Endothelial cell of umbilical vein (primary cell): ENCODE measurements at regions of chr1 and their contacts with region 1.

Region 1: DNA sequence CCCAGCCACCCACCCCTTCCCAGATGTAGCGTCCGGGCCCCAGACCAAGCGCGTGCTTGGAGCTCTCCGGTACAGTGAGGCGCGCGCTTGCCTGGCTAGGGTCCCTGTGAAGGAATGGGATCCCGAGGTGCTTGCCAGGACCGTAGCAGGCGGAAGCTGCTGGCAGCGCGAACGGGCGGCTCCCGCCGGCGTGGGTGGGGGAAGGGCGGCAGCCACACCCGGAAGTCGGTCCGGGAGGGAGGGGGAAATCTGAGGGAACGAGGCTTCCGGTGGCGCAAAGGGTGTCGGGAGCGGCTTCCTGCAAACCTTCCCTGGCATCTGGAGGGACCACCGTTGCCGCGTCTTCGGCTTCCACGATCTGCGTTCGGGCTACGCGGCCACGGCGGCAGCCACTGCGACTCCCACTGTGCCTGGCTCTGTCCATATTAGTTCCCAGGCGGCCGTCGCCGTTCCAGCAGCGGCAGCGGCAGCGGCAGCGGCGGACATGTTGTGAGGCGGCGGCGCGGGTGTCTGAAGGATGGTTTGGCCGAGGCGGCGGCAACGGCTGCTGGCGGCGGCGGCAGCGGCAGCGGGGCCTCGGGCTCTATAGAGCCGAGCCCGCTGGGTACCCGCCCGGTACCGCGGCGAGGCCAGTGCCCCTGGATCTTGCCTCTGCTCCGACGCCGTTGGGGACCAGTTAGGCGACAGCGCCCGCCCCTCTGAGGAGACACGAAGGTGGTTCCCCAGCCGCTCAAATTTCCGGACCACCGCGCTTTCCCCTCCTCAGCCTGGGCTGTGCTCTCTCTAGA is at the start of gene DR1:
- DNase-seq: peak; percentile 94
- H3K4me3 ChIP-seq: peak within 1 kb of the TSS; percentile 89 to 99 (median 97)
- H3K27ac ChIP-seq: peak within 1 kb of the TSS; percentile 88
- H3K4me1 ChIP-seq: peaks cover 22% of the 10 kb centered on the region
- H3K27me3 ChIP-seq: no peaks in the 10 kb centered on the region
- CTCF ChIP-seq: no peak
- POLR2A ChIP-seq: peak; percentile 93
- total RNA-seq, gene DR1: 49.4 and 52.2 TPM in 2 replicates

Region 2: DNA sequence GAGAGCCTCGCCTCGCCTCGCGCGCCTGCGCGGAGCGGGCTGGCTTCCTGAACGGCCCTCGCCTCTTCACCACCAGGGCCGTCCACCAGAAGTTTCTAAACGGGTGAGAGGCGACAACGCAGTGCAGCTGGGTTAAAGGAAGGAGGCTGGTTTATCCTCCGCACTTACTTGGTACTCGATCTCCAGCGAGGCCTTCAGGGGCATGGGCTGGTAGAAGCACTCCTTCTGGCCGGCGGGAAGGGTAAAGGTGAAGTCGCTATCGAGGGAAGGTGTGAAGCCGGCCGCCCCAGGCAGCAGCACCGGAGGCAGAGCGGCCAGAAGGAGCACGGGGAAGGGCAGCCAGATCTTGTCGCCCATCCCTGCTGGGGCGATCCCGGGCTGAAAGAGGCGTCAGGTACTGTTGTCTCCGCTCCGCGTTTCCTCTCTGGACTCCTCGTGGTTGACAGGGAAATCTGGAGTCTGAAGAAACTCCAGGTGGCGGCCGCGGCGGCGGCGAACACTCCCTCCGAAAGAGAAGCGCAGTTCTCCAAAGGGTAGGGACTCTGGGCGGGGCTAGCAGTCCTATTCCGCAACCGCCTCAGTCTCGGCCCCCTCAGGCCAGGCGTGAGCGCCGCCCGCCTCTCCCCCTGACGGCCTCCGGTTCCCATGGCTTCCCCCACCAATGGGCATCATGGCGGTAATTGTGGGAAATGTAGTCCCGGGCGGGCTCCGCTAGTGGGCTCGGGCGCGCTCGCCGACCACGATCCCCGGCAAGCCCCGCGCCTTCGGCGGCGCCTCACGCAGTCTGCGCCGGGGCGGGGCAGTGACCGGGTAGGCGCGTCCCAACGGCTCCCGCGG is 165.7 kb before region 1 on chr1 and contains the start of gene TMED5:
- CTCF ChIA-PET with region 1: interaction called, 3 read pairs
- POLR2A ChIA-PET with region 1: no interaction called
- dilution Hi-C with region 1: no loop called
- intact Hi-C with region 1: loop called (anchors 1 kb)
- DNase-seq: peak; percentile 99
- H3K4me3 ChIP-seq: peak within 1 kb of the TSS; percentile 80 to 87 (median 85)
- H3K27ac ChIP-seq: peak within 1 kb of the TSS; percentile 69
- H3K4me1 ChIP-seq: peaks cover 16% of the 10 kb centered on the region
- H3K27me3 ChIP-seq: no peaks in the 10 kb centered on the region
- CTCF ChIP-seq: peak in 1 of 2 donors; percentile 27
- POLR2A ChIP-seq: peak; percentile 91
- total RNA-seq, gene TMED5: 48.8 and 51.2 TPM in 2 replicates

Region 3: GRCh38 chr1:93415296-93415695 is 69.5 kb after region 1 on chr1:
- CTCF ChIA-PET with region 1: no interaction called
- POLR2A ChIA-PET with region 1: no interaction called
- dilution Hi-C with region 1: no loop called
- intact Hi-C with region 1: no loop called
- DNase-seq: peak; percentile 9
- H3K4me3 ChIP-seq: no peak overlapping the region
- H3K27ac ChIP-seq: no peak overlapping the region
- H3K4me1 ChIP-seq: peaks cover 5% of the 10 kb centered on the region
- H3K27me3 ChIP-seq: peaks cover 0 to 2% of the 10 kb centered on the region in 2 experiments
- CTCF ChIP-seq: no peak
- POLR2A ChIP-seq: no peak

Region 4: GRCh38 chr1:93433407-93433961 is 87.7 kb after region 1 on chr1:
- CTCF ChIA-PET with region 1: no interaction called
- POLR2A ChIA-PET with region 1: no interaction called
- dilution Hi-C with region 1: no loop called
- intact Hi-C with region 1: no loop called
- DNase-seq: no peak
- H3K4me3 ChIP-seq: no peak overlapping the region
- H3K27ac ChIP-seq: no peak overlapping the region
- H3K4me1 ChIP-seq: no peaks in the 10 kb centered on the region
- H3K27me3 ChIP-seq: peaks cover 5 to 12% of the 10 kb centered on the region in 2 experiments
- CTCF ChIP-seq: peak in 1 of 2 donors; percentile 16
- POLR2A ChIP-seq: no peak

Region 5: DNA sequence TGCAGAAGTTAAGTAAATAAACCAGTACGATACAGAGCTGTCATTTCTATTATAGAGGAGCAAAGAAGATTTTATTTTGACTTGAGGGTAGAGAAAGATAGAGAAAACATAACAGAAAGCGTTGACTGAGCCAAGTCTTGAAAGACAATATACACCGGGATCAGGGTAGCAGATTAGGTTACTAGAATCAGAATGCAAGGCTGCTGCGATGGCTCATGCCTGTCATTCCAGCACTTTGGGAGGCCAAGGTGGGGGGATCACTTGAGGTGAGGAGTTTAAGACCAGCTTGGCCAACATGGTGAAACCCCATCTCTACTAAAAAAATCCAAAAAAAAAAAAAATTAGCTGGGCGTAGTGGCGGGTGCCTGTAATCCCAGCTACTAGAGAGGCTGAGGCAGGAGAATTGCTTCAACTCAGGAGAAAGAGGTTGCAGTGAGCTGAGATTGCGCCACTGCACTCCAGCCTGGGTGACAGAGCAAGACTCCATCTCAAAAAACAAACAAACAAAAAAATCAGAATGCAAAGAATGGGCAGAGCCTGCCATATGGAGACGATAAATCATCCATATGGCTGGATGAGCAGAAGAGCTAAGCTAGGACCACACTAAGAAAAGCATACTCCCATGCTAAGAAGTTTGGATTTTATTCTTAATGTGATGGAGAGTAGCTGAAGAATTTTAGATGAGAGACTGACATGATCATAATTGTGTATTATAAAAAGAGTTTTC is 1062.4 kb after region 1 on chr1:
- CTCF ChIA-PET with region 1: no interaction called
- POLR2A ChIA-PET with region 1: no interaction called
- dilution Hi-C with region 1: no loop called
- intact Hi-C with region 1: no loop called
- DNase-seq: no peak
- H3K4me3 ChIP-seq: no peak overlapping the region
- H3K27ac ChIP-seq: no peak overlapping the region
- H3K4me1 ChIP-seq: no peaks in the 10 kb centered on the region
- H3K27me3 ChIP-seq: peaks cover 9 to 10% of the 10 kb centered on the region in 2 experiments
- CTCF ChIP-seq: no peak
- POLR2A ChIP-seq: no peak